Activated CD4-positive, alpha-beta T cell treated with anti-CD3 and anti-CD28 coated beads for 36 hours (primary cell): ENCODE measurements at regions of chr18 and their contacts with region 1.

Region 1: GRCh38 chr18:14000884-14001283 is 85.5 kb upstream of the MC2R start:
- DNase-seq: no peak
- ATAC-seq: no peak
- H3K4me3 Mint-ChIP-seq: no peak overlapping the region
- H3K27ac Mint-ChIP-seq: no peak overlapping the region
- H3K4me1 Mint-ChIP-seq: no peaks in the 10 kb centered on the region
- H3K27me3 Mint-ChIP-seq: peaks cover 2% of the 10 kb centered on the region

Region 2: DNA sequence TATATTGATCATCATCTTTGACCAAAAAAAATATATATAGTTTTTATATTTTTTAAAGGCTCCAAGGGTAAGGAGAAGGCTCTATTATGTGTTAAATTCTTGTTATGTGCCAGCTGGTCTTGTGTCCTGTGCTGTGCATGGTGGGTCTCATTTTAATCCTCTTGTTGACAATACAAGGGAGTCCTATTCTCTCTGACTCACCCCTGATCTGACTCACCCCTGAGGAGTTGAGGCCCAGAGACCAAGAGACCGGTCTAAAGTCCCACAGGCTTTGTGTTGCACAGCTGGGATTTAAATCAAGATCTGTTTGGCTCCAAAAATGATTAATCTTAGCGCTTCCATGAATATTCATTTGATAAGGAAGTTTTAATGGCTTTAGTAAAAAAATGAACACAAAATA is 111.2 kb before region 1 on chr18:
- CTCF ChIA-PET with region 1: no interaction called
- POLR2A ChIA-PET with region 1: no interaction called
- intact Hi-C with region 1: loop called in 1 of 2 experiments (anchors 10 kb)
- DNase-seq: no peak
- ATAC-seq: peak; percentile 36
- H3K4me3 Mint-ChIP-seq: no peak overlapping the region
- H3K27ac Mint-ChIP-seq: no peak overlapping the region
- H3K4me1 Mint-ChIP-seq: no peaks in the 10 kb centered on the region
- H3K27me3 Mint-ChIP-seq: peaks cover 31% of the 10 kb centered on the region

Region 3: DNA sequence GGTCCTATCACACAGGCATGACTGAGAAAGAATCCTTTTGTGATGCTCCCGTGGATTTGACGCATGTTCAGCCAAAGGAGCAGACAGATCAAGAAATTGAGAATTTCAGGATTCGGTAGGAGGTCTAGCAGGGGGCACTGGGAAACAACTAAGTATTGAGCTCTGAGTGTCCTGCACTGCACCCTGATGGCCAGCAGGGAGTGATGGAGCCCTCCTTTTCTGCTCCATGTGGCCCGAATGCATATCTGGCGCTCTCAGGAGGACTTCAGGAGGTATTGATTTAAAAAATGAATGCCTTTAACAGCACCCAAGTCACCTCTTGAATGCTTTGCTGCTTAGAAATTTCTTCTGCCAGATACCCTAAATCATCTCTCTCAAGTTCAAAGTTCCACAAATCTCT is 73.3 kb after region 1 on chr18:
- CTCF ChIA-PET with region 1: no interaction called
- POLR2A ChIA-PET with region 1: no interaction called
- intact Hi-C with region 1: loop called in 1 of 2 experiments (anchors 10 kb)
- DNase-seq: peak; percentile 18
- ATAC-seq: no peak
- H3K4me3 Mint-ChIP-seq: no peak overlapping the region
- H3K27ac Mint-ChIP-seq: no peak overlapping the region
- H3K4me1 Mint-ChIP-seq: no peaks in the 10 kb centered on the region
- H3K27me3 Mint-ChIP-seq: no peaks in the 10 kb centered on the region